Endothelial cell of umbilical vein (primary cell): ENCODE measurements at regions of chr1 and their contacts with region 1.

Region 1: DNA sequence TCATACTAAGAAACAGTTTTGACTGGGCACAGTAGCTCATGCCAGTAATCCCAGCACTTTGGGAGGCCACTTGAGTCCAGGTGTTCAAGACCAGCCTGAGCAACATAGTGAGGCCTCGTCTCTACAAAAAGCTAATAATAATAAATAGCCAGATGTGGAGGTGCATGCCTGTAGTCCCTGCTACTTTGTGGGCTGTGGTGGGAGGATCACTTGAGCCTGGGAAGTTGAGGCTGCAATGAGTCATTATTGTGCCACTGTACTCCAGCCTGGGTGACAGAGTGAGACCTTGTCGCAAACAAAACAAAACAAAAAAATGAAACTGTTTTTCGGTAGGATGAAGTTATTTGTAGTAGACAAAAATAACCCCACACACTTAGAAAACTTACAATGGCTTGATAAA is 19.0 kb upstream of the OLFM3 start:
- DNase-seq: no peak
- H3K4me3 ChIP-seq: no peak overlapping the region
- H3K27ac ChIP-seq: no peak overlapping the region
- H3K4me1 ChIP-seq: no peaks in the 10 kb centered on the region
- H3K27me3 ChIP-seq: no peaks in the 10 kb centered on the region
- CTCF ChIP-seq: no peak
- POLR2A ChIP-seq: no peak

Region 2: GRCh38 chr1:101980974-101981373 is 34.8 kb before region 1 on chr1:
- CTCF ChIA-PET with region 1: no interaction called
- POLR2A ChIA-PET with region 1: no interaction called
- dilution Hi-C with region 1: no loop called
- intact Hi-C with region 1: loop called (anchors 2 kb)
- DNase-seq: no peak
- H3K4me3 ChIP-seq: no peak overlapping the region
- H3K27ac ChIP-seq: no peak overlapping the region
- H3K4me1 ChIP-seq: no peaks in the 10 kb centered on the region
- H3K27me3 ChIP-seq: no peaks in the 10 kb centered on the region
- CTCF ChIP-seq: no peak
- POLR2A ChIP-seq: no peak